ENCODE measurements at regions of chr11 and their contacts with region 1.

Region 1: DNA sequence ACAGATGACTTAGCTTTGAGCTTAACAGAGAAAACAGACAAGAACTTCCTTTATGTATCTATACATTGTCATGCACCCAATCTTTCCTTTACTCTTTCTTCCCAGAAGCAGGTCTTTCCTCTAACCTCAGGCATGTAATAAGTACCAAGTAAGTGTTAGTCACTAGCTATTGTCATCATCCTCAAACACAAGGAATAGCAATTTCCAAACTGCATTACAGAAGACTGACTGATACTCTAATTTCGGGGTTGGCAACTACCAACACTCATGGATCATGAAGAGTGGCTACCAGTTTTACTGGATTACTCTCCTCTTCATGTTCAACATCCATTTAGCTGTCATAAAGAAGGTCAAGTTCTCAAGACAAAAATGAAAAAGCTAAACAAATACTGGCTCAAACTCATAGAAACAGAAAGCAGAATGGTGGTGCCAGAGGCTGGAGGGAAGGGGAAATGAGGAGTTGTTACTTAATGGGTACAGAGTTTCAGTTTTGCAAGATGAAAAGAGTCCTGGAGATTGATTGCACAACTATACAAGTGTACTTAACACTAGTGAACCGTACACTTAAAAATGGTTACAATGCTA is 111.6 kb downstream of the SIK3 start:
- DNase-seq: peak; percentile 31
- ATAC-seq: peak; percentile 82
- H3K4me3 Mint-ChIP-seq: peak overlapping the region; percentile 30
- H3K27ac Mint-ChIP-seq: peak overlapping the region; percentile 76
- H3K4me1 Mint-ChIP-seq: peaks cover 71% of the 10 kb centered on the region
- H3K27me3 Mint-ChIP-seq: no peaks in the 10 kb centered on the region

Region 2: DNA sequence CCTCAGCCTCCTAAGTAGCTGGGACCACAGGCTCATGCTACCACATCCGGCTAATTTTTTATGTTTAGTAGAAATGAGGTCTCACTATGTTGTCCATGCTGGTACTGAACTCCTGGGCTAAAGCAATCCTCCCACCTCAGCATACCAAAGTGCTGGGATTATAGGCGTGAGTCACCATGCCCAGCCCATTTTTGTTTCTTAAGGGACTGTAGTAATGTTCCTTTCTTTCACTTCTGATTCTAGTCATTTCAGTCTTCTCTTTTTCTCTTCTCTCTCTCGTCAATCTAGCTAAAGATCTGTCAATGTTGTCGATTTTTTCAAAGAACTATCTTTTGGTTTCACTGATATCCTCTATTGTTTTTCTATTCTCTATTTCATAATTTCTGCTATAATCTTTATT is 38.2 kb before region 1 on chr11:
- CTCF ChIA-PET with region 1: interaction called, 6 read pairs
- POLR2A ChIA-PET with region 1: no interaction called
- intact Hi-C with region 1: loop called in 1 of 2 experiments (anchors 2 kb)
- DNase-seq: peak; percentile 61
- ATAC-seq: peak; percentile 90
- H3K4me3 Mint-ChIP-seq: no peak overlapping the region
- H3K27ac Mint-ChIP-seq: no peak overlapping the region
- H3K4me1 Mint-ChIP-seq: peaks cover 24% of the 10 kb centered on the region
- H3K27me3 Mint-ChIP-seq: no peaks in the 10 kb centered on the region

Region 3: GRCh38 chr11:117010808-117011540 is 24.4 kb after region 1 on chr11:
- CTCF ChIA-PET with region 1: interaction called, 9 read pairs
- POLR2A ChIA-PET with region 1: interaction called, 14 read pairs
- intact Hi-C with region 1: loop called (anchors 1 kb)
- DNase-seq: no peak
- ATAC-seq: peak; percentile 93
- H3K4me3 Mint-ChIP-seq: no peak overlapping the region
- H3K27ac Mint-ChIP-seq: peak overlapping the region; percentile 67
- H3K4me1 Mint-ChIP-seq: peaks cover 44% of the 10 kb centered on the region
- H3K27me3 Mint-ChIP-seq: no peaks in the 10 kb centered on the region

Region 4: DNA sequence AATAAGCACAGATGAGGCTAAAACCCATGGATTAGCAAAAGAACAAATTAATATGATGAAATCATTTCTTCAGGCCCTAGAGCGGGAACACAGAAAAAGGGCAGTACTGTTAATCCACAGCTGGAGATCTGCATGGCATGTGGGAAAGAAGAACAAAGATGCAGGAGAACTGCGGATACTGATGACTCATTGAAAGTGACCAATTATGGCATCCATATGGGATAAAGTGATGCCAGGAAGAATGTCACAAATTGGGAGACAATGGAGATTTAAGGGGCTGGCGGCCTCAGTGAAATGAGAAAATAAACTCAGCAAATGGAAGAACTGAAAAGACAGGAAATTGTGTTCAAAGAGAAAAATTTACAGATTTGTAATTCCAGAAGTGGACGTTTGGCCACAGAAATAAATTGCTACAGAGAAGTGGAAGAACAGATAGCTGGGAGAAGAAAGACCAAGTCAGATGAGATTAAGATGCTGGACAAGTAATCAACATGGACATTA is 72.2 kb after region 1 on chr11:
- CTCF ChIA-PET with region 1: interaction called, 3 read pairs
- POLR2A ChIA-PET with region 1: interaction called, 4 read pairs
- intact Hi-C with region 1: loop called (anchors 1 kb)
- DNase-seq: no peak
- ATAC-seq: no peak
- H3K4me3 Mint-ChIP-seq: no peak overlapping the region
- H3K27ac Mint-ChIP-seq: no peak overlapping the region
- H3K4me1 Mint-ChIP-seq: peaks cover 54% of the 10 kb centered on the region
- H3K27me3 Mint-ChIP-seq: no peaks in the 10 kb centered on the region

Region 5: DNA sequence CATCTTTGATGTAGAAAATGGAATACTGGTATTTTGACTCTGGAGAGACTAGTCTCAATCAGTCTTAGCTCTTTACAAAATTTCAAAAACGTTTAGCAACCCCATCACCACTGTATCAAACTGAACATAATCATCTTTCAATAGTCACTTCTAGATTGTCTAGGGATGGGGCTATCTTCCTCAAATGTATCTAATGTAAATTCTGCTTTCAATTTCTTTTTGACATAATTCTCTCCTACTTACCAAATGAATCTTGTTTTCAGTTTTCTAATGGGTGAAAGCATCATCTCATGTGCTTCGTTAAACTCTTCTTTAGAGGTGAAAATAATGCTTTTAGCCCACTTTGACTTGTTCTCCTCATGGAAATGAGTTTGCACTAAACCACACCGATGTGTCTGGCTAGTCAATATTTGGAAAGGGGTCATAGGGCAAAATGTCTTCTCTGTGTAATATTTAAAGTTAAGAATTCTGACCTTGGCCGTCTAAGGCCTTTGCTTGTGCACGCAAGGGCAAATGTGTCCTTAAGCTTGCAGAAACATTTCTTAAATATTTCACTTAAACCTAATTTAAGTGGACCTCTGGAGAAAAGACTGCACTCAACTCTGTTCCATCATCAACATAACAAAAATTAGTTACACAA is 106.5 kb after region 1 on chr11:
- CTCF ChIA-PET with region 1: interaction called, 3 read pairs
- POLR2A ChIA-PET with region 1: interaction called, 7 read pairs
- intact Hi-C with region 1: loop called in 1 of 2 experiments (anchors 1 kb)
- DNase-seq: no peak
- ATAC-seq: peak; percentile 77
- H3K4me3 Mint-ChIP-seq: peak overlapping the region; percentile 32
- H3K27ac Mint-ChIP-seq: peak overlapping the region; percentile 76
- H3K4me1 Mint-ChIP-seq: peaks cover 82% of the 10 kb centered on the region
- H3K27me3 Mint-ChIP-seq: no peaks in the 10 kb centered on the region

Measured in activated CD4-positive, alpha-beta T cell treated with anti-CD3 and anti-CD28 coated beads for 36 hours (primary cell).